AG04449 (cell line): ENCODE measurements at regions of chr10 and their contacts with region 1.

Region 1: DNA sequence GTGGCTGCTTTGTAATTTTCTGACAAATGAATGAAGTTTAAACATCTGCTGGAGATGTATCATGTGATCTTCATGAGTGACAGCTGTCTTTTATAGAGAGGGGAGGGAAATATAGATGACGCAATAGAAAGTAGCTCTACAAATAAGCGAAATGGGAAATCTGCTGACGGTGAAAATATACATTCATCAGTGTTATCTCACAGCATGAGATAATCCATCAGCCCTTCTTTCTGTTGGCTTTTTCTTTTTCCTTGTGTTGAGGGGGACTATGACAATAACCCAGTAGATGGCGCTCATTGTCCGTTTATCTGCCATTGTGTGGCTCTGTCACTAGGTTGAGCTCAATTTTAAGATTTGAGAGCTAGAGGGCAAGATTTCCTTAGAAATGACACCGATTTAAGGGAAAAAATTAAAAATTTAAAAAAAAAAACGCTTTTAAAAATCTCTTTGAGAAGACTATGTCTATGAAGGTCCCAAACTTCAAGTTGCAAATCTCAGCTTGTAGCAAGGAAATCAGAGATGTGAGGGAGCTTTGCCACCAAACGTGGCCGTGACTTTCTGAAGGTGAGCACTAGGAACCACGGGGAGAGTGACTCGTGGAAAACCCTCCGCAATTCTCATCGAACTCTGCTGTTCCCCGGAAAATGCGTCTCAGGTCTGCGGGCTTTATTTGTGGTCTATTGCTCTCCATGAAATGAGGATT is 114.6 kb upstream of the SFMBT2 start:
- DNase-seq: peak; percentile 23
- H3K4me3 ChIP-seq: no peak overlapping the region
- CTCF ChIP-seq: peak; percentile 57

Region 2: DNA sequence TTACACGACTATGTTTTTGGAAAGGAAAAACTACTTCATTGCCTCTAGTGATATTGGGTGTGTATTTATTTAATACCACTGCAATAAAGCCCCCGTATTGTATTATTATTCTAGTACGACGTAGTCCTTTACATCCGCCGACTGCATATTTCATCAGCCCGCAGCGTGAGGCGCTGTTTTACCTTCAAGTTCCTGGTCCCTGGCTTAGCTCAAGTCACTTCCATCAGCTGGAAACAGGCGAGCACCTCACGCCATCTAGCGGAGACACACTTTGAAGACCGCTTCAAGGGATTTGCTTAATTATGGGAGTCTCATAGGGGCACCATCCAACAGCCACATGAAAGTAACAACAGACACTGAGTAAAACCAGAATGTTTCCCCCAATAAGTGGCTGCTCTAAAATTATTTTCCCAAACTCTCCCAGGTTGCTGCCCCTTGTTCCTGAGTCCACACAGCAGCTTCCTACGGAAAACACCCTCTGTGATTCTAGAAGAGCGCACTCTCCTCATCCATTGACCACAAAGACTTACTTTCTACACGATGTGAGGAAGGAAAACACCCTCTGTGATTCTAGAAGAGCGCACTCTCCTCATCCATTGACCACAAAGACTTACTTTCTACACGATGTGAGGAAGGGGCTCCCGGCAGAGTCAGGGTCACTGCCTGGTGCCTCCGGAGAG is 161.9 kb after region 1 on chr10:
- CTCF ChIA-PET with region 1: interaction called, 49 read pairs
- POLR2A ChIA-PET with region 1: no interaction called
- DNase-seq: peak; percentile 28
- H3K4me3 ChIP-seq: no peak overlapping the region
- CTCF ChIP-seq: peak; percentile 81

Region 3: DNA sequence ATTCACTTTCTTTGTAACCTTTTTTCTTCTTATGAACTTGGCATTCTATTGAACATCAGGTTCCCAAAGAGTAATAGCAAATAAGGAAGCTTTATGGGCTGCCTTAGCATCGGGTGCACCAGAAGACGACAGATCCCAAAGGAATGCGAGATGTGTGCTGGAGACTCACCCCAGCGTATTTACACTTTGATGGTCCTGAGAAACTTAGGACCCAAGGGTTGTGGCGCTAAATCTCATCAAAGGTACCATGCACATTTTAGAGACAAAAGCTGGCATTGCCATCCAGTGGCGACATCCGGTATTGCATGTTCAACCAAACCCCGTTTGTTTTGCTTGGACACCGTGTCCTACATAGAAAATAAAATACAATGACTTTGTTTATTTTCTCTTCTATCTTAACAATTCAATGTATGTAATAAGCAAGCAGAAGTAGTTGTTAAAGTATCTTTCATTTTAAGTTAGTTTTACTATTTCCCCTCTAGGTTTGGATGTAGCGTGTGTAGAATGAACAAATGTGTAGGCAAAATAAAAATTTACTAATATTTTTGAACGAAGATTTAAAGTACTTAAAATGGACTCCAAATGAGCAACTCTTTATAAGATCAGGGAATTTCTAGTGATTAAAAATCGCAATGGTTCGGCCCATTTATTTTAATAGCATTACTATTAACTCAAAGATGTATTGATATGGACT is 1683.8 kb after region 1 on chr10:
- CTCF ChIA-PET with region 1: interaction called, 15 read pairs
- POLR2A ChIA-PET with region 1: no interaction called
- DNase-seq: no peak
- H3K4me3 ChIP-seq: no peak overlapping the region
- CTCF ChIP-seq: peak; percentile 82

Region 4: DNA sequence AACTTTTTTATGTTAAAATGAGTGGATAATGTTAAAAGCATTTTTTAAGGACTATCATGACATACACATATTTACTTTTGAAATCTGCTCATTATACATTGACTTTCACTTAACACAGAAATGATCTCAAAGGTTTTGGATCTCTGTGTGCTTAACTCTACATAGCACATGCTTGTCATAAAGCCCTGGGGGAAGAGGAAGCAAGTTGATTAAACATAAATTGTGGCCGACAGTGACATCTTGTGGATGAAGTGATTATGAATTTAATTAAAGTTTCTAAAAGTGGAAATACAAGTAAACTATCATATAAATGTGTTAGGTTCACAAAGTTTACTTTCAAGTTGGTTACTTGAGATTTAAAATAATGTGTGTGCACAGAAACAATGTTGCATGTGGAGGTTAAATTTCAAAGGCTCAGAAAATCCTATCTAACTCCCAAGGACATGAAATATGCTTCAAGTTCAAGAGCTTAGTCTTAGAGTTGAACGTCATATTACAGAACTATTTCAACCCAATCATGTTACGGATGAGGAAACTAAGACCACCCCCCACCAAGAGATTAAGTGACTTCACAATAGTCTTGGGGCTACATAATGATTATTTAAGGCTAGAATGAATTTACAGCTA is 1776.8 kb after region 1 on chr10:
- CTCF ChIA-PET with region 1: interaction called, 17 read pairs
- POLR2A ChIA-PET with region 1: no interaction called
- DNase-seq: peak; percentile 3
- H3K4me3 ChIP-seq: no peak overlapping the region
- CTCF ChIP-seq: no peak